Left colon (tissue), 2 donors: ENCODE measurements at regions of chr4 and their contacts with region 1.

Region 1: GRCh38 chr4:26557164-26557563 is 26.7 kb upstream of the TBC1D19 start:
- DNase-seq: no peak
- ATAC-seq: no peak

Region 2: GRCh38 chr4:25807102-25807728 is 749.9 kb before region 1 on chr4:
- intact Hi-C with region 1: no loop called
- DNase-seq: no peak
- ATAC-seq: no peak

Region 3: DNA sequence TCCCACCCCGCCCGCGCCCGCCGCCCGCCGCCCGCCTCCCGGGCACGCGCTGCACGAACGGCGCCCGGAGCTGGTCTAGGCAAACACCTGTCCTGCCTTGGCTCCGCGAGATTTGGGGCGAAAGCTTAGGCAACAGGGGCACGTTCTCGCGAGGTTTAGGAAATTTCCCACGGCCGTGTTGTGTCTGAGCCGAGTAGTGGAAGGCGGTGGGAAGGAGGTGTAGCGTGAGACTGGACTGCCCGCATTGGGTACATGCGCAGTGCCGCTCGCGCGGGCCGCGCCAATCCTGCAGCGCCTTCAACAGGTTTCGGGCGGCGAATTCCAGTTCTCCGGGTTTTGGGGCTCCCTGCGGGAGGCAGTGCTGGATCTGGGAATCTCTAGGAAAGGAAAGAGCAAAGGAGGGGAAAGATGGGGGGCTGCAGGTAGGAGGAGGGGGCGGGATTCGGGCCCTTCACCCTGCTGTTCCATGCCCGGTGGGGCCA is 237.7 kb before region 1 on chr4:
- intact Hi-C with region 1: no loop called
- DNase-seq: peak; percentile 98 to 100
- ATAC-seq: peak; percentile 88

Region 4: DNA sequence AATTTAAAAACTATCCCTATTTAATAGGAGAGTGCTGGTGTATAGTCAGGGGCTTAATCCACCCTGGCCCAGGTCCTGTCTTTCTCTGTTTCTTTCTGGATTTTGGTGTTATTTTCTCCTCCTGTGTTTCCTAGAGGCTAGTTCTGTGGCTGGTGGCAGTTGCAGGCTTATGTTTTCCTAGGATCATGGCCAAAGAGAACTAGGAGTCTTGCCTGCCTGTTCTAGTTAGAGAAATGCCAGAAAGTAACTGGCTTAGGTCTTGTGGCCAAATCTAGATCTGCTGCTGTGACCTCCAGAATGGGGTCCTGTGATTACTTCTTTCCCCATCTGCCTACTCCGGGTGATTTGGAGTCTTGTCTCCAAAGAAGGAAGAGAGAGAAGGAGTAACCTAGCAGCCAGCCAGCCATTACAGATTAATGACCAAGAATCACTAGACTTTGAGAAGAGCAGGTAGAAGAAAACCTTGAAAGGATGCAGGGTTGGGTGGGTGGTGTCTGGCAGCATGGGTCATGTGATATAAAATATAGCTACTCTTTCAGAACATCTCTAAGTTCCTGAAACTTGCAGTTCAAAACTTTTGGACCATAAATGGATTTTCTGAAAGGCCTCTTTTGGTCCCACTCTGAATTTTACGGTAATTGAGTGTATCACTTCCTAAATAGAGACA is 421.4 kb after region 1 on chr4:
- intact Hi-C with region 1: loop called in 1 of 2 experiments (anchors 5 kb)
- DNase-seq: no peak
- ATAC-seq: no peak